A549 (cell line): ENCODE measurements at regions of chr11 and their contacts with region 1.

Region 1: GRCh38 chr11:65588199-65589054 is 7.2 kb downstream of the KCNK7 start:
- DNase-seq: peak; percentile 77 to 86
- ATAC-seq: peak; percentile 76 to 90
- H3K4me3 ChIP-seq: no peak overlapping the region
- H3K27ac ChIP-seq: peak overlapping the region in 1 of 2 experiments; percentile 69; a peak in 3 of 6 replicates
- H3K4me1 ChIP-seq: peaks cover 15% of the 10 kb centered on the region
- CTCF ChIP-seq: peak; percentile 50
- EP300 ChIP-seq: no peak
- POLR2A ChIP-seq: no peak
- RAD21 ChIP-seq: peak; percentile 50 to 68

Region 2: DNA sequence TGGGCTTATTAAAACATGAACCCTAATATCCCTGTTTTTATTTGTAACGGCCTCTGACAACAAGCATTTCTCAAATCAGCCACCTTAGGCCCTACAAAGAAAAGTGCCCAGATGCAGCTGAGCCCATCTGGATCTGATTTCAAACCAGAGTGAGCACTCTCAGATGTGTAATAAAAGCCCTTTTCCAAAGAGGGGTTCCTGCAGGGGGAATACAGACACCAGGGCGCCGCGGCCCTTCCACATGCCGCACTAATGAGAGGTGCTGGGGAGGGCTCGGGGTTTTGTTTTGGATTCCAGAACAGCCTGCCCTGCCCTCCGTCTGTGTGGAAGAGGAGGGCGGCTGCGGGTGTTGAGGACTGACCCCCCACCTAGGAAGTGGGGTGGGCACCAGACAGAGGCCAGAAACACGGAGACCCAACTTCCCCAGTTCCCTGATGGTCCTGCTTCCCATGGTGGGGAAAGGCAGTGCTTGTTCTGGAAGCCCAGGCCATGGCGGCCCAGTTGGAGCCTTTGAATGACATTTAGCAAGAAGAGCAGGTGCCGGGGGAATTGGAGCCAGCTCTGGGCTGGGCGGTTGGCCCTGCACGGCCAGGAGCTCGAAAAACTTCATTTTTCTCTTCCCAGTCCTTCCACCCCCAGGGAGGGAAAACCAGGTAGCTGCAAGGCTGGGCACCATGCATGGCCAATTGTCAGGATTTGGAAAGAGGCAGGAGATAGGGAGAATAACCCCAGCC is 1486.3 kb before region 1 on chr11:
- CTCF ChIA-PET with region 1: no interaction called
- POLR2A ChIA-PET with region 1: no interaction called
- DNase-seq: no peak
- ATAC-seq: no peak
- H3K4me3 ChIP-seq: no peak overlapping the region
- H3K27ac ChIP-seq: no peak overlapping the region
- H3K4me1 ChIP-seq: no peaks in the 10 kb centered on the region
- CTCF ChIP-seq: no peak
- EP300 ChIP-seq: no peak
- POLR2A ChIP-seq: no peak
- RAD21 ChIP-seq: no peak

Region 3: DNA sequence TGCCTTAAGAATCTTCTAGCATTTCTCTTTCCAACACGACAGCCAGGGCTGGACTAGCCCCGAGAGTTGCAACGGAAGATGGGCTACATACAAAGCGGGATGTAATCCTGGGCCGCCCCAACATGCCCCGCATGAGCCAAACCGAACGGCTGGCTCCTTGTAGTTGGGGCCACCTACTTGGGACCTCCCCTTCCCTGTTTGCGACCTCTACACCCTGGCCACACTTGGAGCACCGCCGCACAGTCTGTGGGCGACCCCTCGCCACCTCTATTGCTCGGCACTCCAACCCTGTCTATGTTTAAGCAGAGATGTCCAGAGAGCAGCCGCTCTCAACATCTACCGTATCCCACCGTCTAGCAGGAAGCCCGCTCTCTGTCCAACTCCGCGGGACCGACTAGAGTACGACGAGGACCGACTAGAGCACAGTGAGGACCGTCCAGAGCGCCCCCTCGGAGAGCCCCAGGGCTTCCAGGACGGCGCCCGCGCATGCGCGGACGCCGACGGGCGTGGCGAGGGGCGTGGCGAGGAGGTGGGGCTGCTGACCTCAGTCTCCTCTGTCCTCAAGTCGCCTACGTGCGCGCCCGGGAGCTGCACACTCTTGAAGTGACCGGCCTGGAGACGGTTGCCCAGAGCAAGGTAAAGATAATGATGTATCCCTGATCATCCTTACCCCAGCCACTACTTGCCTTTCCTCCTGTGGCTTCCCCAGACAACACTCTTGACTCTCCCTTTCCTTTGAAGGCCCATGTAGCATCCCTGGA is 133.6 kb before region 1 on chr11:
- CTCF ChIA-PET with region 1: no interaction called
- POLR2A ChIA-PET with region 1: no interaction called
- DNase-seq: peak; percentile 88 to 91
- ATAC-seq: peak; percentile 85 to 86
- H3K4me3 ChIP-seq: peak overlapping the region; percentile 66
- H3K27ac ChIP-seq: peak overlapping the region; percentile 92 to 96
- H3K4me1 ChIP-seq: peaks cover 37% of the 10 kb centered on the region
- CTCF ChIP-seq: peak; percentile 37; the same call in 1 of the 3 replicates
- EP300 ChIP-seq: no peak
- POLR2A ChIP-seq: peak; percentile 90
- RAD21 ChIP-seq: no peak; a peak in 1 of 5 replicates

Region 4: DNA sequence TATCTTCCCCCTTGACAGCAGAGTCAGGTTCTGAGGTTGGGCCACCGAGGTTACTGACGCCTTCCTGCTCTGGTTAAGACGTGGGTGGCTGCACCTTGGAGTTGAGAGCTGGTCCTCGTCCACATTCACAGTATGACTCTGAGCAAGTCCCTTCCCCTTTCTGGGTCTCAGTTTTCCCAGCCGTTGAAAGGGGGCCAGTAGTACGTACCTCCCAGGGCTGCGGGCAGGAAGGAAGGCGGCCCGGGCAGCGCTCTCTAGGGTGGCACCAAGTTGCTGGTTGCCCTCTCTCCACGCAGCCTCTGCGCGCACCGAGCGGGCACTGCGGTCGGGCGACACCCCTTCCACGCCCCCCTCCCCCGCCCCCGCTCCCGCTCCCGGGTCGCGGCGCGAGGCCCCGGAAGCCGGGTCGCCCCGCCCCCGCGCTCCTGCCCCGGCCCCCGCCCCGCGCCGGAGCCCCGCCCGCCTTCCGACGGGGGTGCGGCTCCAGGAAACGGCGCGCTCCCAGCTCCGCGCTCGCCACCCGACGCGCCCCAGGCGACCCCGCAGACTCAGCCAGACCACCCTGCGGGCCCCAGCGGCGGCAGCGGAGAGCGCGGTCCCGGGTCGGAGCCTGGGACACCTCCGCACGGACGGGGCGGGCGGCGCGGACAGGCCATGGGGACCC is 12.7 kb before region 1 on chr11 and contains the start of gene EHBP1L1:
- CTCF ChIA-PET with region 1: interaction called, 119 read pairs
- POLR2A ChIA-PET with region 1: interaction called, 5 read pairs
- DNase-seq: peak; percentile 64 to 68
- ATAC-seq: peak; percentile 9 to 11
- H3K4me3 ChIP-seq: peak within 1 kb of the TSS; percentile 82
- H3K27ac ChIP-seq: peak within 1 kb of the TSS; percentile 92 to 98
- H3K4me1 ChIP-seq: peaks cover 57% of the 10 kb centered on the region
- CTCF ChIP-seq: no peak
- EP300 ChIP-seq: no peak
- POLR2A ChIP-seq: no peak; the same call in 1 of the 2 replicates
- RAD21 ChIP-seq: no peak
- polyA plus RNA-seq, gene EHBP1L1: 11.6 and 13.8 TPM in 2 replicates

Region 5: GRCh38 chr11:65615229-65615941 is 27.0 kb after region 1 on chr11 and contains the start of gene PCNX3:
- CTCF ChIA-PET with region 1: interaction called, 249 read pairs
- POLR2A ChIA-PET with region 1: interaction called, 4 read pairs
- DNase-seq: peak; percentile 100
- ATAC-seq: peak; percentile 78 to 86
- H3K4me3 ChIP-seq: peak within 1 kb of the TSS; percentile 92
- H3K27ac ChIP-seq: peak within 1 kb of the TSS; percentile 96 to 98
- H3K4me1 ChIP-seq: peaks cover 39% of the 10 kb centered on the region
- CTCF ChIP-seq: no peak
- EP300 ChIP-seq: no peak
- POLR2A ChIP-seq: peak; percentile 45
- RAD21 ChIP-seq: no peak
- polyA plus RNA-seq, gene PCNX3: 14.2 and 17.2 TPM in 2 replicates